Sigmoid colon (tissue), 7 donors: ENCODE measurements at regions of chr18 and their contacts with region 1.

Region 1: DNA sequence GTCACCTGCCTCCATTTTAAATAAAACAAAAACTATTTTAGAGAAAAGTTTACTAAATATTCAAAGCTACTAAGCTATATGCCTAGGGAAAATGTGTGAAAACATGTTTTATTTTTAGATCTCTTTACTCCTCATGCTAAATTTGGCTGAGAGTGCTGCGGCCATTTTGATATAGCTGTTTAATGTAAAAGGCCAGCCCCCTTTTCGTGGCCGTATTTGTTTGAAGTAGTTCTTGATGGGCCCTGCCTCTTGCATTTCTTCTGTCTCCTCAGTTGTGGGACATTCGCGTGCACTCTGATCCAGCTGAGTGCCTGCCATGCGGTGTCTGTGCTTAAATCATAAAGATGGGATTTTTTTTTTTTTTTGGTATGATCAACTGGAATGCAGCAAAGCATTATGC is 64.0 kb downstream of the ZNF407 start:
- DNase-seq: no peak
- H3K4me3 ChIP-seq: peak overlapping the region in 1 of 4 donors; percentile 13
- H3K27ac ChIP-seq: no peak overlapping the region
- H3K4me1 ChIP-seq: peaks cover 0 to 17% (median 4%) of the 10 kb centered on the region in 4 donors
- H3K27me3 ChIP-seq: no peaks in the 10 kb centered on the region
- CTCF ChIP-seq: no peak
- EP300 ChIP-seq: no peak
- POLR2A ChIP-seq: no peak

Region 2: GRCh38 chr18:74679006-74679678 is 17.5 kb after region 1 on chr18:
- intact Hi-C with region 1: no loop called
- DNase-seq: no peak
- H3K4me3 ChIP-seq: no peak overlapping the region
- H3K27ac ChIP-seq: no peak overlapping the region
- H3K4me1 ChIP-seq: peaks cover 0 to 41% (median 26%) of the 10 kb centered on the region in 4 donors
- H3K27me3 ChIP-seq: no peaks in the 10 kb centered on the region
- CTCF ChIP-seq: no peak
- EP300 ChIP-seq: no peak
- POLR2A ChIP-seq: no peak

Region 3: GRCh38 chr18:74906184-74906583 is 244.5 kb after region 1 on chr18:
- intact Hi-C with region 1: loop called (anchors 5 kb)
- DNase-seq: no peak
- H3K4me3 ChIP-seq: no peak overlapping the region
- H3K27ac ChIP-seq: peak overlapping the region in 3 of 4 donors; percentile 41 to 69 (median 49)
- H3K4me1 ChIP-seq: peaks cover 0 to 28% (median 12%) of the 10 kb centered on the region in 4 donors
- H3K27me3 ChIP-seq: no peaks in the 10 kb centered on the region
- CTCF ChIP-seq: no peak
- EP300 ChIP-seq: no peak
- POLR2A ChIP-seq: no peak